Psoas muscle (tissue), 8 donors: ENCODE measurements at regions of chr17 and their contacts with region 1.

Region 1: DNA sequence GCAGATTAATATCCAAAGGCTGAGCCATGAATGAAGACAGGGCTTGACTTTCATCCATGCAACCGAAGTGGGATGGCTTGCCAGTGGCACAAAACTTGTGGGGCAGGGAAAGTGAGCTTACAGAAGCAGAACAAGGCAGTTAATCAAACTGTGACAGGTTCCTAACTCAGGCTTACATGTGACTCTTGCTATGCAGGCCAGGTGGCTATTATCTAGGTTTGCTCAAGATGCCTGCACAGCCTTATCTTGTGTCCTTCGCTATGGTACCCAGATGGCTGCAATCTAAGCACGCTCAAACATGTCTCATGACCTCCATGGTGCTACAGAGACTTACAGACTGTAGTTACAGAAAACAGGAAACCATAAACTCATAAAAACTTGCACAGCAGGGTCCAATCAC is 8.6 kb upstream of the DNAH9 start:
- DNase-seq: no peak
- ATAC-seq: no peak
- H3K4me3 ChIP-seq: no peak overlapping the region
- H3K27ac ChIP-seq: no peak overlapping the region
- H3K4me1 ChIP-seq: no peaks in the 10 kb centered on the region
- H3K27me3 ChIP-seq: no peaks in the 10 kb centered on the region
- CTCF ChIP-seq: no peak

Region 2: DNA sequence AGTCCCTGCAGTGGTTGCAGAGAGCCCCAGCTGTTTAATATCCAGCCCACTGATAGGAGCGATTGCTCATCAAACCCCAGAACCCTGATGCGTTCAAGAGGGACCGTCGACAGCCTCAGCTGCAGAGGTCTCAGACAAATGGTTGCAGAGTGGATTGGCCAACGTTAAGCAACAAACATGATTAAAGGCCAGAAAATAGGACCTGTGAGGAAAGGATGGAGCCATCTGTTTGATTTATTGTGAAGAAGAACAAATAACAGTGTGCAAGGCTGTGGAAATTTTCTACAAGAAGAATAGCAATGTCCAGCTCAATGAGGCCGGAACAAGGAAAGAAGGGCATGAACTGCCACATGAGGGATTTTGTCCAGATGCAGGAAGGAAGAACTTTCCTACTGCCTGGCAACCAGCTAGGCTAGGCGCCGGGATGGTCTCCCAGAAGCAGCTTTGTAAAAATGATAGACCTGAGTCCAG is 129.8 kb before region 1 on chr17:
- intact Hi-C with region 1: no loop called
- DNase-seq: no peak
- ATAC-seq: peak in 1 of 4 donors; percentile 13
- H3K4me3 ChIP-seq: no peak overlapping the region
- H3K27ac ChIP-seq: no peak overlapping the region
- H3K4me1 ChIP-seq: no peaks in the 10 kb centered on the region
- H3K27me3 ChIP-seq: no peaks in the 10 kb centered on the region
- CTCF ChIP-seq: no peak

Region 3: GRCh38 chr17:11638700-11639265 is 49.1 kb after region 1 on chr17:
- intact Hi-C with region 1: loop called in 1 of 2 experiments (anchors 10 kb)
- DNase-seq: no peak
- ATAC-seq: no peak
- H3K4me3 ChIP-seq: no peak overlapping the region
- H3K27ac ChIP-seq: no peak overlapping the region
- H3K4me1 ChIP-seq: no peaks in the 10 kb centered on the region
- H3K27me3 ChIP-seq: no peaks in the 10 kb centered on the region
- CTCF ChIP-seq: no peak